Posterior cingulate gyrus (tissue), 11 donors: ENCODE measurements at regions of chr1 and their contacts with region 1.

Region 1: DNA sequence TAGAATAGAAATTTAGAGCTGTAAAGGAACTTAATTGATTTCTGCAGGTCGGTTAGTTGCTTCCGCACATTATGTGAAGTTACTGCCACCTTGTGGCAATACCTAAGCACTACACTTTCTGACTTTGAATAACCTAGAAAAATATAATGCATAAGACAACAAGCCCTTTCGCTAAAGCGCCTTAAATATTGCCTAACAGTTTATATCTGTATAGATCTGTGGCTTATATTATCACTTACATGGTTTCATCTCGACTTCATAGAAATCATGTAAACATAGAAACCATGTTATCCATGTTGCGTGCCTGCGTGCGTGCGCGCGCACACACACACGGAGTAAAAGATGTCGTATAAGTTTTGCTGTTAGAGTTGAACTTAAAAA is 10.9 kb upstream of the IFI16 start:
- DNase-seq: peak in 6 of 10 donors; percentile 48 to 93 (median 54)

Region 2: DNA sequence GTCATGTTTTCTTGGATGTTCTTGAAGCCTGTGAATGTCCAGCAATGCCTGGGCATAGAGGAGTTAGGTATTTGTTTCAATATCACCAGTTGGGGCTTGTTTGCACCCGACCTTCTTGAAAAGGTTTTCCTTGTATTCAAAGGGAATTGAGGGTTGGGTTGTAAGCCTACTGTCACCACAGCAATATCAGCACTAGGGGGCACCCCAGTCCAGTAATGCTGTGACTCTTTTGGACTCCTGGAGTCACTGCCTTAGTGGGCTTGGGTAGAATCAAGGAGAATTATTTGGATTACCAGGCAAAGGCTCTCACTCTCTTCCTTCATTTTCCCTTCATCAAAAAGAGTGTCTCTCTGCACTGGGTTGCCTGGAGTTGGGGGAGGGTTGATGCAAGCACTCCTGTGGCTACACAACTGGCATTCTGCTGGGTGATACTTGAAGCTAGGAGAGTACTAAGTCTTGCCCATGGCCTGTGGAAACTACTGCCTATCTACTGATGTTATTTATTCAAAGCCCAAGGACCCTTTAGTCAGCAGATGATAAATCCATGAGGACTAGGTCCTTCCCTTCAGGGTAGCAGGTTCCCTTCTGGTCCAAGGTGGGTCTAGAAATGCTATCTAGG is 492.3 kb before region 1 on chr1:
- intact Hi-C with region 1: loop called (anchors 10 kb)
- DNase-seq: peak in 2 of 10 donors; percentile 17 to 59

Region 3: DNA sequence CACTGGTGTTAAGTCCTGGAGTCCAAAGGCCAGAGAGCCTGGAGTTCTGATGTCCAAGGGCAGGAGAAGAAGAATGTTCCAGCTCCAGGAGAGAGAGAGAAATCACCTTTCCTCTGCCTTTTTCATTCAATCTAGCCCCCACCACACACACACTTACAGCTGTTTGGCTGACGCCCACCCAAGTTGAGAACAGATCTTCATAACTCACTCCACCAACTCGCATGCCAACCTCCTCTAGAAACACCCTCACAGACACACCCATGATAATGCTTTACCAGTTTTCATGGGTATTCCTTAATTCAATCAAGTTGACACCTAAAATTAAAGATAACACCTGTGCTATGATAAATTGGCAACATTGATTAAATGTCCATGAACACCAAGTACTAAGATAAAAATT is 125.6 kb before region 1 on chr1:
- intact Hi-C with region 1: no loop called
- DNase-seq: no peak

Region 4: GRCh38 chr1:158901623-158902022 is 97.1 kb before region 1 on chr1:
- intact Hi-C with region 1: no loop called
- DNase-seq: no peak

Region 5: DNA sequence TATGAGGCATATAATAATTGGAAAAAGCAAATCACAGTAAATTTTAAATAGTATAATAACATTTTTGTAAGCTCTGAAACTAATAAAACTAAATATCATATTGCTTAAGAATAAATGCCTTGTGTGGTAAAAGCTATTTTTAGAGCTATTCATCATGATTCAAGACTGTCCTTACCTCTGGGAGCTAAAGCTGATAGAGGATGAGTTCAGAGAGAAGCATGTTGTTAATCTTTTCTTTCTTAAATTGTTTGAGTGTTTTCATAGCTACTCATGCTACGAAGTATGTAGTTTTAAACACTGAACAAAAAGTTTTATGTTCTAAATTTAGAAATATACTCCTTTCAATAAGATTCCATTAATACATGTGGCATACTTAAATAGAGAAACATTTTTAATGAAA is 41.4 kb after region 1 on chr1:
- intact Hi-C with region 1: no loop called
- DNase-seq: no peak

Region 6: GRCh38 chr1:159092036-159092760 is 93.4 kb after region 1 on chr1:
- intact Hi-C with region 1: no loop called
- DNase-seq: no peak